Heart right ventricle (tissue), 16 donors: ENCODE measurements at regions of chr6 and their contacts with region 1.

Region 1: GRCh38 chr6:158631678-158632537 is 12.6 kb downstream of the DYNLT1 start:
- DNase-seq: peak; percentile 81
- ATAC-seq: peak; percentile 86 to 94 (median 92)
- H3K4me3 ChIP-seq: peak overlapping the region in 4 of 10 donors; percentile 3 to 17 (median 12)
- H3K27ac ChIP-seq: peak overlapping the region; percentile 38 to 84 (median 74)
- H3K4me1 ChIP-seq: peaks cover 8 to 35% (median 24%) of the 10 kb centered on the region in 9 donors
- H3K27me3 ChIP-seq: no peaks in the 10 kb centered on the region
- CTCF ChIP-seq: no peak

Region 2: GRCh38 chr6:158686791-158687381 is 55.0 kb after region 1 on chr6:
- intact Hi-C with region 1: loop called in 7 of 10 experiments (anchors 5 to 10 kb)
- DNase-seq: no peak
- ATAC-seq: peak in 5 of 8 donors; percentile 33 to 64 (median 44)
- H3K4me3 ChIP-seq: no peak overlapping the region
- H3K27ac ChIP-seq: peak overlapping the region in 1 of 10 donors; percentile 55
- H3K4me1 ChIP-seq: peaks cover 0 to 36% (median 0%) of the 10 kb centered on the region in 9 donors
- H3K27me3 ChIP-seq: no peaks in the 10 kb centered on the region
- CTCF ChIP-seq: no peak

Region 3: DNA sequence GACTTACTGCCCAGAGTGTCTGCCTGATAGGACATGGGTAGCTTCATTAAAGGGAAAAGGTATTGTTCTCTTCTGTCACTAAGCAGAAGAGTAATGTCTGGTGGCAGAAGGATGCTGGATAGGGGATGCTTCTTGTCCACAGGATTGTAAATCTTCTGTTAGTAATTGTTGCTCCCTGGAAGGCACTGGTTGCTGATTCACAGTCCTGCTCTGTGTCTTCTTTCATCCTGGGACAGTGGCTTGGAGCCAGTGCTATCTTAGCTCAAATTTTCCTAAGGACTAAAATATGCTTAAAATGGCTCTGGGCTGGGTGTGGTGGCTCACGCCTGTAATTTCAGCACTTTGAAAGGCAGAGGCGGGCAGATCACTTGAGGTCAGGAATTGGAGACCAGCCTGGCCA is 65.9 kb after region 1 on chr6:
- intact Hi-C with region 1: loop called in 5 of 10 experiments (anchors 5 to 10 kb)
- DNase-seq: no peak
- ATAC-seq: no peak
- H3K4me3 ChIP-seq: no peak overlapping the region
- H3K27ac ChIP-seq: no peak overlapping the region
- H3K4me1 ChIP-seq: no peaks in the 10 kb centered on the region
- H3K27me3 ChIP-seq: no peaks in the 10 kb centered on the region
- CTCF ChIP-seq: no peak